Activated B cell treated with CpG ODN at 0.5 μM for 24 hours (primary cell): ENCODE measurements at regions of chr2 and their contacts with region 1.

Region 1: DNA sequence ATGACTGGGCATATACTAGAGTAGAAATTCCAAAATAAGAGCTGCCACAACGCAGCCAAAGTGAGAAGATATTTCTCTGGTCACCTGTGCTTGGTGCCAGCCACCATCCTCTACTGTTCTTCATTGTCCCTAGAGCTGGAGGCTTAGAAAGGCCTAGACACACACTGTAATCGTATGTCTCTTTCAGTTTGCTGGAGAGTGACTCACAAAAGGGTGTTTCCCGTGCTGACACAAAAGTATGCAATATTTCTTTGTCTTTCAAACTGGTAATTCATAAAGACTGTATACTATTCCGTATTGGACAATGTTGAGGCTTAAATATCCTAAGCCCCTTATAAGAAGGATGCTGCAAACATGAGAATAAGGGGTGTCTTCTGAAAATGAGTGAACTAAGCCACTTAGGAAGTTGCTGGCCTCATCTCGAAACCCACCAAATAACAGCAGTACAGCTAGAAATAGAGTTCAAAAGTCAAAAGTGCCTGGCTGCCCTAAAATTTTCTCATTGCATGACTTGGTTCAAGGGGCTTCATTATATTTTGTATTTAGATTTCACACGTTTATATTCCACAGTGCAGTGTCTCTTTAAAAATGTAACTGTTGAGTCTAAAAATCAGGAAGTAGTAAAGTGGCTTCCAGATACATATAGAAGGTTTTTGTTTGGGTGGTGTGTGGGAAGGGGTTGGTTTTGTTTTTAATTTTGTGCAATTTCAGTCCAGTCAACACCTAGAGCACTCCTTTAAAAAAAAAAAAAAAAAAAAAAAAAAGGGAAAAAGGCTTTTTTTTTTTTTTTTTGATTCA is 601.1 kb downstream of the ARHGAP15 start:
- DNase-seq: no peak
- ATAC-seq: peak; percentile 77
- H3K4me3 Mint-ChIP-seq: peak overlapping the region; percentile 64
- H3K27ac Mint-ChIP-seq: peak overlapping the region; percentile 73
- H3K4me1 Mint-ChIP-seq: peaks cover 41% of the 10 kb centered on the region
- H3K27me3 Mint-ChIP-seq: no peaks in the 10 kb centered on the region
- CTCF ChIP-seq: no peak

Region 2: DNA sequence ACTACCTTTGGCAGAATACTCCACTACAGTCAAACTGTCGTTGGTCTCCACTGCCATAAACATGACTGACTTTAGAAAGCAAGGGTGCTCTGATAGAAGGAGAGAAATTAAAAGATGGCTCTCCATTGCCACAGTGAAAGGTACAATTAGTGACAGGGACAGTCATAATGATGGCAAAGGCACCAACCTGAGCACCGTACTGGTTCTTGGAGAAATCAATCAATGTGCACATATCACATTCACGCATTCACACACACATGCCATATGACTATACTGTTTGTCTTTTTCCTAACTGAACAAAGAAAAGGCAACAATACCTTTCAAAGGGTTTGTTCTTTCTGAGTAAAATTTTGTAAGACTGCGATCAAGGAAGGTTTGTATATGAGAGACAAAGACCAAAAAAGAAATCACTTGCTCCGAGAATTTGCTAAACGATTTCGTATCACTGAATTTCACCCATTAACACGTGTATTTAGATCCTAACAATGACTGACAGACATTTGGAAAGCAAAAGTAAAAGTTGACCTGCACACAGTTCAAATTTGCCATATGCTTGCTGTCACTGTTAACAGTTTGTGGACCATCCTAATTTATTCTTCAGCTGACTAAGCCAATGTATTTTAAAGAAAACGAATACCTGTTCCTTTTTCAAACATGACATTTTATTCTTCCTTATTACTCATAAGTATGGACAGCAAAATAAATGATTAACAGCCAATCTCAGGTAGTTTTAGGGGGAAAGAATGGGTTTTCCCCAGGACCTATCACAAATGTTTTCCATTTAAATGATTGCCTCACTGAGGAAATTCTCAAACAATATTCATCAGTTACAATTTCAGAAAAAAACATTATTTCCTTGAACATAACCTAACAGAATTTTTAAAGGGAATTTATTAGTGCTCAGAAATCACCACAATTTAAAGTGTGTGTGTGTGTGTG is 145.2 kb after region 1 on chr2:
- CTCF ChIA-PET with region 1: no interaction called
- POLR2A ChIA-PET with region 1: no interaction called
- intact Hi-C with region 1: loop called (anchors 1 kb)
- DNase-seq: no peak
- ATAC-seq: peak; percentile 57
- H3K4me3 Mint-ChIP-seq: peak overlapping the region; percentile 9
- H3K27ac Mint-ChIP-seq: peak overlapping the region; percentile 28
- H3K4me1 Mint-ChIP-seq: peaks cover 19% of the 10 kb centered on the region
- H3K27me3 Mint-ChIP-seq: no peaks in the 10 kb centered on the region
- CTCF ChIP-seq: no peak